ENCODE measurements at regions of chr10 and their contacts with region 1.

Region 1: DNA sequence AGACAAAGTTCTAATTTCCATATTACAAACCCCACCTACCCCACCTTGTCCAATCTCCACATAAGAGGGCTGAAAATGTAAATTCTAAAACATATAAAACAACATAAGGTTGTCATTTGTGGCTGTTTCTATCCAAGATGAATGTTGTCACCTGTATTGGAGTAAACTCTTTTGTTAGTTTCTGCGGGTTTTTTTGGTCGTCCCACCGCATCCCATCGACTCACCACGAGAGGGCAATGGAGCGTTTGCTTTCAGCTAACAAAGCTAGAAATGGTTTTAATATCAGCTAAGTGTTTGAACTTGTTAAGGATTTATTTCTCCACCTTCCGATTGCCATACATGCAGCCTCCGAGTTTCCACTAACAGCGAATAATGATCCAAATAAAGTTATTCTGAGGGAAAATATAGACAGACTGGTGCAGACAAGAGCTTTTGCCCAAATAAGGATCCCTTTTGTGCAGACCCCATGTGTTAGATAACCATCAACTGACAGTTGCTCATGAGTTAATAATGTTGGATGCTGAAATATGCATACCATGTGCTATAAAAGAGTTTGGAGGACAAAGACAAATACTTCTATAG is 137.2 kb downstream of the ARID5B start:
- DNase-seq: peak; percentile 62 to 77
- ATAC-seq: peak; percentile 64 to 88 (median 76)
- H3K4me3 ChIP-seq: peak overlapping the region; percentile 46
- H3K27ac ChIP-seq: peak overlapping the region; percentile 39
- H3K4me1 ChIP-seq: peaks cover 45% of the 10 kb centered on the region
- H3K27me3 ChIP-seq: no peaks in the 10 kb centered on the region
- CTCF ChIP-seq: peak; percentile 90

Region 2: DNA sequence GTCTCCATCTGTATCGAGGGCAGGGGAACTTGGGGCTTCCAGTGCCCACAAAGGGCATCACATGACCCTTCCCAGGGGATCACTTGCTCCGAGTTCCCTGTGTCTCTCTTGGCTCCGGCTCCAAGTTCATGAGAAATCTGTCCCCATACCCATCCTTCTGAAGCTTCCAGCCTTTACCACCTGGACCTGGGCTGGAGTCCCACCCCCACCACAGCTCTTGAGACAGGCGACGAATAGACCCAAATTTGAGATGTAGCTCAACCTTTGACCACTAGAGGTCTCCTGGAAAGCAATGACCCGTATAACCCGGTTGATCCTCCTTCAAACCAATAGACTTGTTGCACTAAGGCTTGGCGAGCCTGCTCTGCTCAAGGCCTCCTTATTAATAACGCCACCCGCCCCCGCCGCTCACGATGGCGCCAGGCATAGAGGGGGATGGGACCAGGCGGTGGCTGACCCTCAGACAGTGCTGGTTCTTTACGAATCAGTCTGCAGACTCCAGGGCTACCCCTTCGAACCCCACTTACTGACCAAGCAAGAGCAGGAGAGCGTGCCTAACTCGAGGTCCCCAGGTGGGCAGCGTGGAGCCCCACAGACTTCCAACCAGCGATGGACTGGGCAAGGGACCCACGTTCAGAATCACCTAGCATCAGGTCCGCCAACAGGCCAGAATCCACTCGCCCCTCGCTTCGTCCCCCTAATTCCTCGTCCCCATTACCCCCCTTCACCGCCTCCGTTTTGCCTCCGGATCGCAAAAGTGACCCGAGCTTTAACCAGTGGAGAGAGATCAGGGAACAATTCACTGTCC is 141.6 kb before region 1 on chr10:
- intact Hi-C with region 1: loop called (anchors 5 to 10 kb)
- DNase-seq: peak; percentile 53 to 72
- ATAC-seq: peak; percentile 74 to 79 (median 78)
- H3K4me3 ChIP-seq: peak overlapping the region; percentile 59
- H3K27ac ChIP-seq: peak overlapping the region; percentile 44
- H3K4me1 ChIP-seq: peaks cover 24% of the 10 kb centered on the region
- H3K27me3 ChIP-seq: no peaks in the 10 kb centered on the region
- CTCF ChIP-seq: peak; percentile 66

Measured in psoas muscle (tissue), 8 donors.